ENCODE measurements at regions of chr11 and their contacts with region 1.

Region 1: GRCh38 chr11:108697872-108698473 is 33.1 kb downstream of the DDX10 start:
- DNase-seq: peak; percentile 20 to 69 (median 42)
- ATAC-seq: peak; percentile 98
- H3K4me3 ChIP-seq: no peak overlapping the region
- H3K27ac ChIP-seq: no peak overlapping the region
- H3K4me1 ChIP-seq: peaks cover 0 to 3% of the 10 kb centered on the region in 2 experiments; a peak in 1 of 5 replicates
- H3K27me3 ChIP-seq: no peaks in the 10 kb centered on the region
- CTCF ChIP-seq: peak; percentile 74 to 94 (median 80)
- EP300 ChIP-seq: no peak
- POLR2A ChIP-seq: no peak
- RAD21 ChIP-seq: peak; percentile 90

Region 2: GRCh38 chr11:108733479-108734116 is 35.6 kb after region 1 on chr11:
- CTCF ChIA-PET with region 1: no interaction called
- POLR2A ChIA-PET with region 1: no interaction called
- in situ Hi-C with region 1: no loop called
- intact Hi-C with region 1: loop called (anchors 2 kb)
- DNase-seq: peak in 2 of 4 experiments; percentile 15 to 38
- ATAC-seq: peak; percentile 66
- H3K4me3 ChIP-seq: no peak overlapping the region
- H3K27ac ChIP-seq: peak overlapping the region; percentile 8; the same call in 2 of the 3 replicates
- H3K4me1 ChIP-seq: peaks cover 0 to 7% of the 10 kb centered on the region in 2 experiments; a peak in 1 of 5 replicates
- H3K27me3 ChIP-seq: no peaks in the 10 kb centered on the region
- CTCF ChIP-seq: no peak
- EP300 ChIP-seq: no peak
- POLR2A ChIP-seq: no peak
- RAD21 ChIP-seq: no peak

Region 3: DNA sequence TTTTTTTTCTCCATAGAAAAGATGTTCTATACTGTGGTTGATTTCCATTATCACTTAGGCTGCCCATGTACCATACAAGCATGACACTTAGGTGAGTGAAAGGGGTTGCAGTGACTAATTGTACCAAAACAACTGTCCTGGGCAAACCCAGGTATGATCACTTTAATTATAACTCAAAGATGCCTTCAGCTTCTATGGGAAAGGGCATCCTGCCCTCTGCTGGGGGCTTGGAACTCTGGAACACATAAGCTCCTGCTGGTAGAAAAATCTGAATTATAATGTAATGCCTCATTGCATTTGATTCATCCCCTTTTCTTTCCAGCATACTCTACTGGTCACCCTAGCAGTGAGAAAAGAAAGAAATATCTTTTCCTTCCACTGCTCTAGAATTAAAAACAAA is 173.2 kb after region 1 on chr11:
- CTCF ChIA-PET with region 1: interaction called, 9 read pairs
- POLR2A ChIA-PET with region 1: no interaction called
- in situ Hi-C with region 1: no loop called
- intact Hi-C with region 1: loop called (anchors 1 kb)
- DNase-seq: peak in 1 of 4 experiments; percentile 25
- ATAC-seq: peak; percentile 61
- H3K4me3 ChIP-seq: no peak overlapping the region
- H3K27ac ChIP-seq: no peak overlapping the region
- H3K4me1 ChIP-seq: no peaks in the 10 kb centered on the region; a peak in 1 of 5 replicates
- H3K27me3 ChIP-seq: no peaks in the 10 kb centered on the region
- CTCF ChIP-seq: peak; percentile 19 to 51 (median 34); a peak in 3 of 6 replicates
- EP300 ChIP-seq: no peak
- POLR2A ChIP-seq: no peak
- RAD21 ChIP-seq: peak in 1 of 2 experiments; percentile 39; a peak in 2 of 4 replicates

Region 4: GRCh38 chr11:108958368-108959104 is 260.6 kb after region 1 on chr11:
- CTCF ChIA-PET with region 1: no interaction called
- POLR2A ChIA-PET with region 1: no interaction called
- in situ Hi-C with region 1: no loop called
- intact Hi-C with region 1: loop called (anchors 5 kb)
- DNase-seq: peak in 2 of 4 experiments; percentile 22 to 43
- ATAC-seq: peak; percentile 80
- H3K4me3 ChIP-seq: no peak overlapping the region
- H3K27ac ChIP-seq: no peak overlapping the region
- H3K4me1 ChIP-seq: peaks cover 0 to 2% of the 10 kb centered on the region in 2 experiments; a peak in 1 of 5 replicates
- H3K27me3 ChIP-seq: peaks cover 0 to 8% of the 10 kb centered on the region in 2 experiments; a peak in 1 of 5 replicates
- CTCF ChIP-seq: no peak
- EP300 ChIP-seq: no peak
- POLR2A ChIP-seq: no peak
- RAD21 ChIP-seq: no peak

Region 5: GRCh38 chr11:109697140-109697843 is 999.3 kb after region 1 on chr11:
- CTCF ChIA-PET with region 1: no interaction called
- POLR2A ChIA-PET with region 1: no interaction called
- in situ Hi-C with region 1: no loop called
- intact Hi-C with region 1: loop called (anchors 1 kb)
- DNase-seq: peak; percentile 22 to 43 (median 22)
- ATAC-seq: peak; percentile 90
- H3K4me3 ChIP-seq: no peak overlapping the region
- H3K27ac ChIP-seq: no peak overlapping the region
- H3K4me1 ChIP-seq: no peaks in the 10 kb centered on the region
- H3K27me3 ChIP-seq: no peaks in the 10 kb centered on the region; a peak in 1 of 5 replicates
- CTCF ChIP-seq: peak; percentile 52 to 67 (median 62)
- EP300 ChIP-seq: no peak
- POLR2A ChIP-seq: no peak
- RAD21 ChIP-seq: peak in 1 of 2 experiments; percentile 67; a peak in 3 of 4 replicates

Region 6: DNA sequence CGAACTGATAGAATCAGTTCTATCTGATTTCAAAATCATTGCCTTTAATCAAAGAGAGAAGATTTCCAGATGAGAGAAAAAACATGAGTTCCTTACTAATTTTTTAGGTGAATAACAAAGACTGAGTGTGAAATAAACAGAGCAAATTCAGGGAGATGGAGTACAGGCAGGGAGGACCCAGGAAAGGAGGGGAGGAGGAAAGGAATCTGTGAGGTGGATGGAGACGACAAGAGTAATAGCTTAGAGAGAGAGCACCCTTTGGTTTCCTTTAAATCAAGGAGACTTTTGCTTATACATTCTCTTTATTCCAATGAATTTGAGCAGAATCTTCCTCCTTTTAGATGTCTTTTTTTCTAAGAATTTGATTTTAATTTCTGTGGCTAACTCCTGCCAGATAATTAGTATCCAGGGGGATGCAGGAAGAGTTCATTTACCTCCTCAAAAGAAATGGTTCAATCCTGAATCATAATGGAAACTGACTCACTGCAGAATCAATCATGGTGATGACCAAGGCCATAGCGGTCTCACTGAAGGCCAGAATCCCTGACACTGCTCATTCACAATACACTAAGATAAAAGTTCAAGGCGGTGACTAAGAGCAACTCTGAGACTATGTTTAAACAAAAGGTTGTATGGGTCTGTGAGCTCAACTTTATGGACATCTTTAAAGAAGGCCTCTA is 1161.2 kb after region 1 on chr11:
- CTCF ChIA-PET with region 1: no interaction called
- POLR2A ChIA-PET with region 1: no interaction called
- in situ Hi-C with region 1: no loop called
- intact Hi-C with region 1: loop called (anchors 5 kb)
- DNase-seq: peak in 1 of 4 experiments; percentile 22
- ATAC-seq: peak; percentile 64
- H3K4me3 ChIP-seq: no peak overlapping the region
- H3K27ac ChIP-seq: no peak overlapping the region
- H3K4me1 ChIP-seq: peaks cover 0 to 3% of the 10 kb centered on the region in 2 experiments; a peak in 1 of 5 replicates
- H3K27me3 ChIP-seq: no peaks in the 10 kb centered on the region
- CTCF ChIP-seq: no peak
- EP300 ChIP-seq: no peak
- POLR2A ChIP-seq: no peak
- RAD21 ChIP-seq: no peak

Region 7: GRCh38 chr11:109939166-109939810 is 1241.3 kb after region 1 on chr11:
- CTCF ChIA-PET with region 1: interaction called, 3 read pairs
- POLR2A ChIA-PET with region 1: no interaction called
- in situ Hi-C with region 1: no loop called
- intact Hi-C with region 1: loop called (anchors 2 kb)
- DNase-seq: peak; percentile 41 to 72 (median 53)
- ATAC-seq: peak; percentile 91
- H3K4me3 ChIP-seq: no peak overlapping the region
- H3K27ac ChIP-seq: no peak overlapping the region
- H3K4me1 ChIP-seq: peaks cover 0 to 5% of the 10 kb centered on the region in 2 experiments; a peak in 2 of 5 replicates
- H3K27me3 ChIP-seq: no peaks in the 10 kb centered on the region
- CTCF ChIP-seq: peak; percentile 67 to 81 (median 73)
- EP300 ChIP-seq: no peak
- POLR2A ChIP-seq: no peak
- RAD21 ChIP-seq: peak; percentile 90 to 94